Left cardiac atrium (tissue), 4 donors: ENCODE measurements at regions of chr13 and their contacts with region 1.

Region 1: GRCh38 chr13:27171827-27172494 is 350 bp upstream of the USP12 start:
- DNase-seq: peak; percentile 95
- ATAC-seq: peak; percentile 97

Region 2: GRCh38 chr13:27006519-27007161 is 165.3 kb before region 1 on chr13:
- intact Hi-C with region 1: loop called in 1 of 2 experiments (anchors 10 kb)
- DNase-seq: no peak
- ATAC-seq: peak; percentile 74 to 83

Region 3: DNA sequence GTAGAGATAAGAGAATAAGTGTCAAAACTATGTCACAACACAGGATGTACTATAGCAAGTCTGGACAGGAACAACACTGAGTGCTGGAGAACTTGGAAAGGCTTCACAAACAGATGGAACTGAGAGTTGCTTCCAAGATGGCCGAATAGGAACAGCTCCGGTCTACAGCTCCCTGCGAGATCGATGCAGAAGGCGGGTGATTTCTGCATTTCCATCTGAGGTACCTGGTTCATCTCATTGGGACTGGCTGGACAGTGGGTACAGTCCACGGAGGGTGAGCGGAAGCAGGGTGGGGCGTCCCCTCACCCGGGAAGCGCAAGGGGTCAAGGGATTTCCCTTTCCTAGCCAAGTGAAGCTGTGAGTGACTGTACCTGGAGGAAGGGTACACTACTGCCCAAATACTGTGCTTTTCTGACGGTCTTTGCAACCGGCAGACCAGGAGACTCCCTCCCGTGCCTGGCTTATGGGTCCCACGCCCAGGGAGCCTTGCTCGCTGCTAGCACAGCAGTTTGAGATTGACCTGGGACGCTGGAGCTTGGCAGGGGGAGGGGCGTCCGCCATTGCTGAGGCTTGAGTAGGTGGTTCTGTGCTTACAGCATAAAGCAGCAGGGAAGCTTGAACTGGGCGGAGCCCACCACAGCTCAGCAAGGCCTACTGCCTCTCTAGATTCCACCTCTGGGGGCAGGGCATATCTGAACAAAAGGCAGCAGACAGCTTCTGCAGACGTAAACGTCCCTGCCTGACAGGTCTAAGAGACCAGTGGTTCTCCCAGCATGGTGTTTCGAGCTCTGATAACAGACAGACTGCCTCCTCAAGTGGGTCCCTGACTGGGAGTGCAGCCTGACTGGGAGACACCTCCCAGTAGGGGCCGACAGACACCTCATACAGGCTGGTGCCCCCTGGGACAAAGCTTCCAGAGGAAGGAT is 46.3 kb before region 1 on chr13:
- intact Hi-C with region 1: loop called in 1 of 2 experiments (anchors 5 kb)
- DNase-seq: no peak
- ATAC-seq: no peak

Region 4: GRCh38 chr13:27251166-27252091 is 79.5 kb after region 1 on chr13 and contains the start of gene RPL21:
- intact Hi-C with region 1: loop called (anchors 5 to 10 kb)
- DNase-seq: peak; percentile 98
- ATAC-seq: peak; percentile 98 to 99
- total RNA-seq, gene RPL21: 729 to 803 TPM

Region 5: GRCh38 chr13:27917121-27917947 is 745.4 kb after region 1 on chr13:
- intact Hi-C with region 1: no loop called
- DNase-seq: no peak
- ATAC-seq: no peak